ENCODE measurements at regions of chr2 and their contacts with region 1.

Region 1: DNA sequence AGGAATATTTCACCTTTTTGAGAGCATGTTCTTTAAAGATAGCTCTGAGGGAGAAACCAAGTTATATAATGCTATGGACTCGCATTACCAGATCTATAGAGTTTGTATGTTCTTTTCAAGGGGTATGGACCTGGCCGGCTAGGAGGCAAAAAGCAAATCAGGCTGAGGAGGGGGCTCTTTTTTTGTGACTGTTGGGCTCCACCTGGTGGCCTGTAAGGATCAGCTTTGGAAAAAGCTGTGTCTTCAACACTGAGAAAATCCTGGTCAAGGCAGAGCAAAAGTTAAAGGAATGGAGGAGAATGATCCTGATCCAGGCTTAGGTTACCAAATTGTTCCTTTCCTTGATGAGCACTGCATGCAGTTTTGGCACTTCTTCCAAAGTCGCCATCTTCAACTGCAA is 180.5 kb downstream of the DIS3L2 start:
- DNase-seq: peak; percentile 14
- H3K4me3 ChIP-seq: no peak overlapping the region
- H3K27ac ChIP-seq: no peak overlapping the region
- H3K4me1 ChIP-seq: no peaks in the 10 kb centered on the region
- H3K27me3 ChIP-seq: no peaks in the 10 kb centered on the region
- CTCF ChIP-seq: peak; percentile 50 to 74

Region 2: DNA sequence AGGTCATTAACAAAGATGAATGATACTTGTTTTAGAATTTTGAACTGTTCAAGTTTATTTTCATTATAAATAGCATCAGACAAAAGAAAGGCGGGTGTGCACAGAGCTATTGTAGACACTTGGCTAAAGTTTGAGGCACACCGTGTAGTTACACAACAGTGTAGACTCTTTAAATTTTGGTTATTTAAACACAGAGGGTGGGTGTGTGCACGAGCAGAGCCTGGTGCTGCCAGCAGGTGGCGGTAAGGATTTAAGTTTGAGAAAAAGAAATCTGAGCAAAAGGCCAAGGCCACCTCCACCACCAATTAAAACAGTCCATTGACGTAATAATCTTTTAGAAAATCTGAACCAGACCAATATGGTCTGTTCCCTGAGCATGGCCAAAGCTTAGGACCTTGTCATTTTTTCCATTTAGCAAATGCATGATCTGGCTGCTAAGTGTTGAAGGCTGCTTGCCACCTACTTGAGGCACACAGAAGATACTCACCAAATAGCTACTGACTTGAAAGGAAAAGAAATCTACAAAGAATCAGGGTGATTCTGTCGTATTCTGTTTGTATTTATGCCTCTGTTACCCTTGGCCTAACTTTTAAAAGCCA is 341.5 kb before region 1 on chr2:
- CTCF ChIA-PET with region 1: no interaction called
- dilution Hi-C with region 1: no loop called
- in situ Hi-C with region 1: no loop called
- intact Hi-C with region 1: no loop called
- DNase-seq: no peak
- H3K4me3 ChIP-seq: no peak overlapping the region
- H3K27ac ChIP-seq: no peak overlapping the region
- H3K4me1 ChIP-seq: no peaks in the 10 kb centered on the region
- H3K27me3 ChIP-seq: no peaks in the 10 kb centered on the region
- CTCF ChIP-seq: peak; percentile 70 to 80

Region 3: DNA sequence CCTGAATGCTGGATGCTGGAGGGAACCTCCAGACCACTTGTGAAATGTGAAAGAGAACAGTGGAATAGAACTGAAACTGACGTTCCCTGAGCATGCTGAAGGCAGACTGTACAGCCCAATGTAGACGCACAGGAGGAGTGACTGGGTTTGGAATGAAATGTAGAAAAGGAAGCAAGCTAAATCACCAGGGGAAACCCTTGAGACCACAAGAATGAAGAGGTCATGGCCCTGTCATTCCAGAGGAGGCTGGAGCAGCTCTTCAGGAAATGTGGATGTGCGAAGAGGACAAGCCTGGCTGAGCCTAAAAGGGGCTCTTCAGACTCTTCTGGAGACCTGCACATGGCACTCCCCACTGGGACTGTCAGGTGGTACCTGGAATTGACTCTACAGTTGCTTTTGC is 118.0 kb after region 1 on chr2:
- CTCF ChIA-PET with region 1: no interaction called
- dilution Hi-C with region 1: no loop called
- in situ Hi-C with region 1: no loop called
- intact Hi-C with region 1: no loop called
- DNase-seq: peak; percentile 81
- H3K4me3 ChIP-seq: no peak overlapping the region
- H3K27ac ChIP-seq: no peak overlapping the region
- H3K4me1 ChIP-seq: peaks cover 15% of the 10 kb centered on the region
- H3K27me3 ChIP-seq: no peaks in the 10 kb centered on the region
- CTCF ChIP-seq: no peak

Region 4: GRCh38 chr2:232444409-232445148 is 302.5 kb after region 1 on chr2:
- CTCF ChIA-PET with region 1: no interaction called
- dilution Hi-C with region 1: no loop called
- in situ Hi-C with region 1: no loop called
- intact Hi-C with region 1: loop called (anchors 5 kb)
- DNase-seq: peak; percentile 54
- H3K4me3 ChIP-seq: no peak overlapping the region
- H3K27ac ChIP-seq: no peak overlapping the region
- H3K4me1 ChIP-seq: no peaks in the 10 kb centered on the region
- H3K27me3 ChIP-seq: no peaks in the 10 kb centered on the region
- CTCF ChIP-seq: peak; percentile 75 to 80

Measured in mammary epithelial cell (primary cell).